CD8-positive, alpha-beta T cell (primary cell): ENCODE measurements at regions of chr12 and their contacts with region 1.

Region 1: GRCh38 chr12:54359033-54359761 is 5.1 kb downstream of the GPR84 start:
- DNase-seq: peak; percentile 83 to 99 (median 91)
- ATAC-seq: peak; percentile 91
- H3K4me3 ChIP-seq: peak overlapping the region; percentile 77 to 97
- H3K4me3 Mint-ChIP-seq: no peak overlapping the region
- H3K27ac ChIP-seq: peak overlapping the region; percentile 60 to 84
- H3K27ac Mint-ChIP-seq: no peak overlapping the region
- H3K4me1 ChIP-seq: peaks cover 23% of the 10 kb centered on the region
- H3K4me1 Mint-ChIP-seq: peaks cover 16% of the 10 kb centered on the region
- H3K27me3 ChIP-seq: no peaks in the 10 kb centered on the region
- H3K27me3 Mint-ChIP-seq: no peaks in the 10 kb centered on the region
- CTCF ChIP-seq: no peak

Region 2: GRCh38 chr12:53508534-53509199 is 850.5 kb before region 1 on chr12:
- CTCF ChIA-PET with region 1: no interaction called
- POLR2A ChIA-PET with region 1: no interaction called
- intact Hi-C with region 1: no loop called
- DNase-seq: peak; percentile 64 to 90 (median 83)
- ATAC-seq: peak; percentile 100
- H3K4me3 ChIP-seq: no peak overlapping the region
- H3K4me3 Mint-ChIP-seq: no peak overlapping the region
- H3K27ac ChIP-seq: peak overlapping the region in 1 of 2 experiments; percentile 17
- H3K27ac Mint-ChIP-seq: no peak overlapping the region
- H3K4me1 ChIP-seq: peaks cover 9% of the 10 kb centered on the region
- H3K4me1 Mint-ChIP-seq: peaks cover 5% of the 10 kb centered on the region
- H3K27me3 ChIP-seq: no peaks in the 10 kb centered on the region
- H3K27me3 Mint-ChIP-seq: no peaks in the 10 kb centered on the region
- CTCF ChIP-seq: peak; percentile 84

Region 3: DNA sequence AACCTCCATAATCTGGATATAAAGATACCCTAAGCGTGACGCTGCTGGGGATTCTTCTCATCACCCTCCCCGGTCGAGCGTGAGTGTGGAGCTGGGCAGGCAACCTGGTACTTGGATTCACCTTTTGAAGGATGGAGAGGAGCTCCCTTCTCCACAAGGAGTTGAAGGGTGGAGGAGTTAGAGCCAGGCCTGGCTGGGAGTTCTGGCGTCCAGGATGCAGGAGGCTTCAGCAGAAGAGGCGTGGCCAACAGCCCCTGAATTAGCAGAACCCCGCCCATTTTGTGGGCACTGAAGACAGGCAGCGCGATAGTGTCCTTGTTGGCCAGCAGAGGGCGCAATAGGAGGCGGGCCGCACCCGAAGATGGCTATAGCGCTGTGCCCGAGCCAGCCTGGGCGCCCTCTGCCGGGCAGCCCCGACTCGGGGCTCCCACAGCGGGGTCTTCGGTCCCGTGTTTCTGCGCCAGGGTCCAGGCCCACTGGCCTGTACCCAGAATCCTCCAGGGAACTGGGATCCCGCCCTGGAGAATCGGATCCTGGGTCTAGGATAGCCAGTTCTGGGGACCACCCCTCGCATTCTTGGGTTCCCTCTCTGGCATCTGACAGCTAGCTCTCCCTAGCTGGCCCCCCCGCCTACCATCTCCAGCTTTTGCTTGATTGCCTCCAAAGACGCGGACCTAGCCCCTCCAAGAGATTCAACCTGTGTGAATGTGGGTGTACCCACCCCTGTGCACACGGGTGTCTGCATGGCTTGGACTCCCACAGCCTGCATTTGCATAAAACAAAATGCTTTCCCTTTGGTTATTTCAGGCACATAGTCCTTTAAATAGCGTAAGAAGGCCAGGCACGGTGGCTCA is 144.4 kb before region 1 on chr12:
- CTCF ChIA-PET with region 1: interaction called, 21 read pairs
- POLR2A ChIA-PET with region 1: no interaction called
- intact Hi-C with region 1: loop called in 1 of 2 experiments (anchors 1 kb)
- DNase-seq: peak; percentile 78 to 96 (median 91)
- ATAC-seq: peak; percentile 86
- H3K4me3 ChIP-seq: peak overlapping the region; percentile 34 to 47
- H3K4me3 Mint-ChIP-seq: peak overlapping the region; percentile 72
- H3K27ac ChIP-seq: no peak overlapping the region
- H3K27ac Mint-ChIP-seq: no peak overlapping the region
- H3K4me1 ChIP-seq: peaks cover 30% of the 10 kb centered on the region
- H3K4me1 Mint-ChIP-seq: peaks cover 35% of the 10 kb centered on the region
- H3K27me3 ChIP-seq: peaks cover 0 to 7% of the 10 kb centered on the region in 2 experiments
- H3K27me3 Mint-ChIP-seq: peaks cover 22% of the 10 kb centered on the region
- CTCF ChIP-seq: peak; percentile 99

Region 4: DNA sequence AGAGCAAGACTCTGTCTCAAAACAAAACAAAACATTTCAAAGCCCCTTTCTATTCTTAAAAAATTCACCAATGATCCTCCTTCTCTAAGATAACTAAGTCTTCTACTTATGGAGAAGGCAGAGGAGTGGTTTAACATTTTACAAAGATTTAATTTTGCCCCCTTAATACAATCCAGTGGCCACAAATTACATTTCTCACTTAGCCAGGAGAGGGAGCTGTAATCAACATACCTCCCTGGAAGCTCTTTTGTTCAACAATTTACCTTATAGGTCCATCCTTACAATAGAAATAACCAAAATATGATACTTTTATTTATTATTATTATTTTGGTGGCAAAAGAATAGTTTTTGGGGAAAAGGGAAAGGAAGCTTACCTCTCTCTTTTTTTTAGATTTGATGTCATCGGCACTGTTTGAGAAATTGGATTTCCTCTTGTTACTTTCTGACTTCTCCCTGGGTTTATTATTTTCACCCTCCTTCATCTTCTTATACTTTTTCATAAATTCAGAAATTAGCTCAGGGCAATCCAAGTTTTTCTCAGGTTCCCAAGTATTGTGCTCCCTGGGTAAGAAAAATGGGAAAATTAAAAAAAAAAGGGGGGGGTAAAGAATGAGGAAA is 107.4 kb before region 1 on chr12:
- CTCF ChIA-PET with region 1: interaction called, 54 read pairs
- POLR2A ChIA-PET with region 1: interaction called, 5 read pairs
- intact Hi-C with region 1: loop called (anchors 1 to 2 kb)
- DNase-seq: peak in 3 of 9 experiments; percentile 11 to 71 (median 60)
- ATAC-seq: peak; percentile 79
- H3K4me3 ChIP-seq: no peak overlapping the region
- H3K4me3 Mint-ChIP-seq: no peak overlapping the region
- H3K27ac ChIP-seq: no peak overlapping the region
- H3K27ac Mint-ChIP-seq: no peak overlapping the region
- H3K4me1 ChIP-seq: no peaks in the 10 kb centered on the region
- H3K4me1 Mint-ChIP-seq: peaks cover 11% of the 10 kb centered on the region
- H3K27me3 ChIP-seq: no peaks in the 10 kb centered on the region
- H3K27me3 Mint-ChIP-seq: no peaks in the 10 kb centered on the region
- CTCF ChIP-seq: peak; percentile 87

Region 5: DNA sequence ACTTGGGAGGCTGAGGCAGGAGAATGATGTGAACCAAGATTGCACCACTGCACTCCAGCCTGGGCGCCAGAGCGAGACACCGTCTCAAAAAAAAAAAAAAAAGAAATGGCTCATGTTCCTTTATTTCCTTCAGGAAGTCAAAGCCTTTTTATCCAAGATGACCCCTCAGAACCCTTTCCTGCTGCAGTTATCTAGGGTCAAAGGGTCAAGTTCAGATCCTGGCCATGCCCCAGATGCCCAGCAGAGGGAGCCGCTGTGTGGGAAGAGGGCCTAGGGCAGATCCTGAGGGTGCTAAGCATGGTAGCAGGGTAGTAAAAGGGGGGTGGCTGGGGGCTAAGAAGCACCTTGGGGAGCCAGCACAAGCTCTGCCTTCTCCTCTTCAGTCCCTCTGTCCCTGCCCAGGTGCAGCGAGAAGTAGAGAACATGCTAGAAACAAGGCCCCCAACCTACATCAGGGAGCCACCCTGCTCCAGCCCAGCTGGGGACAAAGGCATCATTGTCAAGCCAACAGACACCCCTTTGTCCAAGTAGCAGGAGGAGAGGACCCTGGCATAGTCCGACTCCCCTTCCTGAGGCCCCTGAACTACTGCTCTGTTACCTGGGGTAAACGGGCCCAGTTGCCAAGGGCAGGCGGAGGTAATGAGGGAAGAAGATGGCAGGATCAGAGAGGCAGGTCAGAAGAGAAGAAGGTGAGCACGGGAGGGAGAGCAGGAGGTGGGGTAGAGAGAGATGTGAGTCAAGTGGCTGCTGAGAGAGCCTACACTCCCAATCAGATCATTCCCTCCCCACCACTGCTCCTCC is 64.8 kb before region 1 on chr12:
- CTCF ChIA-PET with region 1: interaction called, 55 read pairs
- POLR2A ChIA-PET with region 1: interaction called, 8 read pairs
- intact Hi-C with region 1: loop called in 1 of 2 experiments (anchors 1 kb)
- DNase-seq: peak in 8 of 9 experiments; percentile 38 to 72 (median 56)
- ATAC-seq: peak; percentile 77
- H3K4me3 ChIP-seq: no peak overlapping the region
- H3K4me3 Mint-ChIP-seq: no peak overlapping the region
- H3K27ac ChIP-seq: no peak overlapping the region
- H3K27ac Mint-ChIP-seq: no peak overlapping the region
- H3K4me1 ChIP-seq: peaks cover 3% of the 10 kb centered on the region
- H3K4me1 Mint-ChIP-seq: peaks cover 7% of the 10 kb centered on the region
- H3K27me3 ChIP-seq: peaks cover 0 to 2% of the 10 kb centered on the region in 2 experiments
- H3K27me3 Mint-ChIP-seq: peaks cover 13% of the 10 kb centered on the region
- CTCF ChIP-seq: peak; percentile 53

Region 6: GRCh38 chr12:54337280-54337842 is 21.8 kb before region 1 on chr12:
- CTCF ChIA-PET with region 1: interaction called, 32 read pairs
- POLR2A ChIA-PET with region 1: interaction called, 7 read pairs
- intact Hi-C with region 1: loop called in 1 of 2 experiments (anchors 2 kb)
- DNase-seq: no peak
- ATAC-seq: no peak
- H3K4me3 ChIP-seq: no peak overlapping the region
- H3K4me3 Mint-ChIP-seq: no peak overlapping the region
- H3K27ac ChIP-seq: no peak overlapping the region
- H3K27ac Mint-ChIP-seq: no peak overlapping the region
- H3K4me1 ChIP-seq: no peaks in the 10 kb centered on the region
- H3K4me1 Mint-ChIP-seq: peaks cover 25% of the 10 kb centered on the region
- H3K27me3 ChIP-seq: no peaks in the 10 kb centered on the region
- H3K27me3 Mint-ChIP-seq: no peaks in the 10 kb centered on the region
- CTCF ChIP-seq: no peak

Region 7: DNA sequence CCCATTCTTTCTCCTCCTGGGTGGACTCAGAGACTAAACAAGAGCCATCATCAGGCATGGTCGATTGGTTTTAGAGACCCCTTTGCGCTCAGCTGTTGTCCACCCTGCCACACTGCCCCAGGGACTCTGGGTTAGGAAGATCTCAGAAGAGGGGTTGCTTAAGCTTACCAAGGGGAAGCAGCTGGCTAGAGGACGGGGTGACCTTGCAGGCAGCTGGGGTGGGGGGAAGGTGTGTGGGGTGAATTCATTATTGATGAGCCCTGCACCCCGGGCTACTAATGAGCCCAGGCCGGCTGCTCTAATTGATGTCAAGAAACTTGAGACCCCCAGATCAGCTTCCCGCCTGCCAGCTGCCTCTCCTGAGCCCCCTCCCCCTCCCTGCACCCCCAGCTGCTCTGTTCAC is 34.0 kb after region 1 on chr12:
- CTCF ChIA-PET with region 1: no interaction called
- POLR2A ChIA-PET with region 1: no interaction called
- intact Hi-C with region 1: no loop called
- DNase-seq: no peak
- ATAC-seq: no peak
- H3K4me3 ChIP-seq: no peak overlapping the region
- H3K4me3 Mint-ChIP-seq: no peak overlapping the region
- H3K27ac ChIP-seq: no peak overlapping the region
- H3K27ac Mint-ChIP-seq: no peak overlapping the region
- H3K4me1 ChIP-seq: peaks cover 8% of the 10 kb centered on the region
- H3K4me1 Mint-ChIP-seq: peaks cover 29% of the 10 kb centered on the region
- H3K27me3 ChIP-seq: no peaks in the 10 kb centered on the region
- H3K27me3 Mint-ChIP-seq: no peaks in the 10 kb centered on the region
- CTCF ChIP-seq: no peak